ENCODE measurements at regions of chr10 and their contacts with region 1.

Region 1: GRCh38 chr10:101012525-101013364 is 13.1 kb downstream of the LZTS2 start:
- DNase-seq: peak; percentile 91
- H3K4me3 ChIP-seq: no peak overlapping the region
- H3K27ac ChIP-seq: peak overlapping the region; percentile 18 to 76; a peak in 3 of 4 replicates
- H3K4me1 ChIP-seq: peaks cover 8 to 26% of the 10 kb centered on the region in 2 experiments; a peak in 3 of 4 replicates
- H3K27me3 ChIP-seq: no peaks in the 10 kb centered on the region
- CTCF ChIP-seq: peak; percentile 97
- EP300 ChIP-seq: no peak
- RAD21 ChIP-seq: peak; percentile 77

Region 2: GRCh38 chr10:100962351-100963080 is 50.2 kb before region 1 on chr10:
- CTCF ChIA-PET with region 1: interaction called, 18 read pairs
- POLR2A ChIA-PET with region 1: no interaction called
- DNase-seq: no peak
- H3K4me3 ChIP-seq: no peak overlapping the region
- H3K27ac ChIP-seq: no peak overlapping the region
- H3K4me1 ChIP-seq: no peaks in the 10 kb centered on the region
- H3K27me3 ChIP-seq: no peaks in the 10 kb centered on the region
- CTCF ChIP-seq: no peak
- EP300 ChIP-seq: no peak
- RAD21 ChIP-seq: no peak

Region 3: DNA sequence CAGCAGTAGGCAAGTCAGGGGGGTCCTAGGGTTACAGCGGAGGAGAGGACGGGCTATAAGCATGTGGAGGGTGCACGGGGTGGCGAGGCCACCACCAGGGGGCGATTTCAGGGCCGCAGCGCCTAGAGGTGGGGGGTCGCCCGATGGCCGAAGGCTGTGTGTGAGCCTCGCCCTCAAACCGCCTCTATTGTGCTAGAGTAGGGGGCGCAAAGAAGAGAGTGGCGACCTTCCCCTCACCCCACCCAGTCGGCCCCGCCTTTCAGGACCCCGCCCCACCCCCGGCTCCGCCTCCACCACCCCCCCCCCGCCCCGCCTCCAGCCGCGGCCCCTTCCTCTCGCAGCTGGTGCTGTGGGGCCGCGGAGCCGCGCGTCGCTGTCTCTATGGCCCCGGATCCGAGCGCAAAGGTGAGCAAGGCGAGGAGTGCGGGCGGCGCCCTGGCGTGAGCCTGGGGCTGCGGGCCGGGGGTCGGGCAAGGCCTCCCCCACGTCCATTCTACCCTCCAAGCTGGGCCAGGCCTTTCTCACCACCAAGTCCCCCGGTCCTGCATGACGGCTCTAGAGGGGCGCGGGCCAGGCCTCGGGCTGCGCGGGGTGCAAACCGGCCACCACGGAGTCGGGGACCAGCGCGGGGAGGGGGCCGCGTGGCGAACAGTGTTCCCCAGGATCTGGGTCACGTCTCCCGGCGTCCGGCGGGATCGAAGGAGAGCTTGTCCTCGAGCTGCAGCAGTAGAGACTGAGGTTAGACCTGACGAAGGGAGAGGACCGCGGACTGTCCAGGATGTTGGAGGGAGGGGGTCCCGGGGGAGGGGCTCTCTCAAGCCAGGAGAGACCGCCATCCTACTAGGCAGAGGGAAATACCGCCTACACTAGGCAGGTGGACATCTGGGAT is 43.3 kb before region 1 on chr10 and contains the start of gene SEMA4G:
- CTCF ChIA-PET with region 1: interaction called, 18 read pairs
- POLR2A ChIA-PET with region 1: no interaction called
- DNase-seq: peak; percentile 97
- H3K4me3 ChIP-seq: peak within 1 kb of the TSS; percentile 79 to 82
- H3K27ac ChIP-seq: peak within 1 kb of the TSS in 1 of 2 experiments; percentile 53; a peak in 1 of 4 replicates
- H3K4me1 ChIP-seq: peaks cover 4 to 19% of the 10 kb centered on the region in 2 experiments; a peak in 2 of 4 replicates
- H3K27me3 ChIP-seq: no peaks in the 10 kb centered on the region
- CTCF ChIP-seq: peak; percentile 79
- EP300 ChIP-seq: no peak
- RAD21 ChIP-seq: peak; percentile 24
- polyA plus RNA-seq, gene SEMA4G: 15.0 and 16.2 TPM in 2 replicates

Region 4: GRCh38 chr10:100986952-100987750 is 25.6 kb before region 1 on chr10 and contains the starts of genes MRPL43 and TWNK:
- CTCF ChIA-PET with region 1: interaction called, 443 read pairs
- POLR2A ChIA-PET with region 1: no interaction called
- DNase-seq: peak; percentile 93
- H3K4me3 ChIP-seq: peak within 1 kb of the TSS; percentile 85 to 98
- H3K27ac ChIP-seq: peak within 1 kb of the TSS; percentile 56 to 95; a peak in 3 of 4 replicates
- H3K4me1 ChIP-seq: peaks cover 21 to 45% of the 10 kb centered on the region in 2 experiments
- H3K27me3 ChIP-seq: no peaks in the 10 kb centered on the region
- CTCF ChIP-seq: no peak
- EP300 ChIP-seq: no peak; a peak in 1 of 4 replicates
- RAD21 ChIP-seq: no peak
- polyA plus RNA-seq, gene MRPL43: 173 and 208 TPM in 2 replicates
- polyA plus RNA-seq, gene TWNK: 16.4 and 20.0 TPM in 2 replicates

Region 5: DNA sequence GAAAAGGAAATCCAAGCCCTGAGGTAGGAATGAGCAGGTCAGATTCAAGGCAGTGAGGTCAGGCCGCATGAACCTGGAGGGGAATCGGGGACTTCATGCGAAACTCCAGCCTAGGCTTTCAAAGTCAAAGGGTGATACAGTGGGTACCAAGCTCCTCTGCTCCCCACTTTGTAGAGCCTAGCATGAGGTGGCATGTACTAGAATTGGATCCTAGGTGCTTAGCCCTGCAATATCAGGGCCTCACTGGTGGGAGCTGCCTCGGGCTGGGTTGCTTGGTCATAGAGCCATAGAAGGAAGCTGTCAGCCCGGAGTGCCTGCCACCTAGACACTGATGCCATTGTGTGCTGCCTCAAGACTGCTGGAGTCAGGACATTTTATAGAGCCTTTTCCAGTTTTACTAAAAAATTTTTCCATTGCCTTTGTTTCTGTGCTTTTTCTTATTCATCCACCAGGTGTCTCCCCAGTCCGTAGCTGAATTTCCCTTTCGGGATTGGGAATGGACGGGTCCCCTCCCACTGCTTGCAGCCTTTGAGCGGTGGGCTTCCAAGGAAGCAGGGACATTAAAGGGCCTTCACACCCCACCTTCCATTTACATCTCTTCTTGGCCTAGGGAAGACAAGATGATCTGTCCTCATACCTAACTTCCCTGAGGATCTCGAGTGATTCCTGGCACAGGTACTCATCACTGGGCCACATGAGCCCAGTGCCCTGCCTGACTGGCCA is 18.6 kb before region 1 on chr10:
- CTCF ChIA-PET with region 1: interaction called, 443 read pairs
- POLR2A ChIA-PET with region 1: interaction called, 8 read pairs
- DNase-seq: peak; percentile 70
- H3K4me3 ChIP-seq: no peak overlapping the region
- H3K27ac ChIP-seq: peak overlapping the region in 1 of 2 experiments; percentile 28; a peak in 1 of 4 replicates
- H3K4me1 ChIP-seq: peaks cover 10 to 31% of the 10 kb centered on the region in 2 experiments
- H3K27me3 ChIP-seq: no peaks in the 10 kb centered on the region
- CTCF ChIP-seq: peak; percentile 77
- EP300 ChIP-seq: no peak
- RAD21 ChIP-seq: peak; percentile 77

Region 6: DNA sequence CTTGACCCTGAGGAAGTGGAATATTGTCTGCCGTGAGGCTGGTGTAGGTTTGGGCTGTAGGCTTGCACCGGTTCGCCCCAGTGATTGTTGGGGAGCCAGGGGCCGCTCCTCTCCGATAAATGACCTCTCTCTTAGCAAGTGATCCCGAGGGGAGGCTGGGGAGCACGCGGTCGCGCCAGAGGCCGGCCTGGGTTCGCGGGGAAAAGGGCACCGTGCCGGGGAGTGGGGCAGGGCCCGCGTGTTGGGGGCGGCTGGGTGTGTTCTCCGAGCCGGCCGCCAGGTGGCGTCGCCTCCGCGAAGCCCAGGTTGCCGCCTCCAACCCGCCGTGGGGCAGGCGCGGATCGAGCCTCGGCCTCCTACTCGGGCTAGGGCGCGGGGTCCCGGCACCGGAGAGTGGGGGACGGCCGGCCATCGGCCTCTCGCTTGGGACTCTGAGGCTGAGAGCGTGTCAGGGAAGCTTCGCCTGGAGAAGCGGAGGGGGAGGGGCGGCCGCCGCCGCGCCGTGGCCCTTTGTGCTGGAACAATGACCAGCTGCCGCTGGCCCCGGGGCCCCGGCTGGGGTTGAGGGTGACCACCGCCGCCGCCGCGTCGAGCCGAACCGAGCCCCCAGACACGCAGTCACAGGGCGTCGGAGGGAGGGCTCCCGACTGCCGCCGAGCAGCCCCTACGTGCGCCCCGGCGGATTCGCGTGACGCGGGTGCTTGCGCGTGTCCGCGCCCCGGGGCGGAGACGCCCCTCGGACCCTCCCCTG is 13.6 kb before region 1 on chr10:
- CTCF ChIA-PET with region 1: interaction called, 443 read pairs
- POLR2A ChIA-PET with region 1: interaction called, 8 read pairs
- DNase-seq: peak; percentile 93
- H3K4me3 ChIP-seq: peak overlapping the region; percentile 66 to 90
- H3K27ac ChIP-seq: peak overlapping the region; percentile 98 to 99
- H3K4me1 ChIP-seq: peaks cover 20 to 37% of the 10 kb centered on the region in 2 experiments; a peak in 3 of 4 replicates
- H3K27me3 ChIP-seq: no peaks in the 10 kb centered on the region
- CTCF ChIP-seq: peak; percentile 77
- EP300 ChIP-seq: no peak; a peak in 1 of 4 replicates
- RAD21 ChIP-seq: peak; percentile 52

Region 7: DNA sequence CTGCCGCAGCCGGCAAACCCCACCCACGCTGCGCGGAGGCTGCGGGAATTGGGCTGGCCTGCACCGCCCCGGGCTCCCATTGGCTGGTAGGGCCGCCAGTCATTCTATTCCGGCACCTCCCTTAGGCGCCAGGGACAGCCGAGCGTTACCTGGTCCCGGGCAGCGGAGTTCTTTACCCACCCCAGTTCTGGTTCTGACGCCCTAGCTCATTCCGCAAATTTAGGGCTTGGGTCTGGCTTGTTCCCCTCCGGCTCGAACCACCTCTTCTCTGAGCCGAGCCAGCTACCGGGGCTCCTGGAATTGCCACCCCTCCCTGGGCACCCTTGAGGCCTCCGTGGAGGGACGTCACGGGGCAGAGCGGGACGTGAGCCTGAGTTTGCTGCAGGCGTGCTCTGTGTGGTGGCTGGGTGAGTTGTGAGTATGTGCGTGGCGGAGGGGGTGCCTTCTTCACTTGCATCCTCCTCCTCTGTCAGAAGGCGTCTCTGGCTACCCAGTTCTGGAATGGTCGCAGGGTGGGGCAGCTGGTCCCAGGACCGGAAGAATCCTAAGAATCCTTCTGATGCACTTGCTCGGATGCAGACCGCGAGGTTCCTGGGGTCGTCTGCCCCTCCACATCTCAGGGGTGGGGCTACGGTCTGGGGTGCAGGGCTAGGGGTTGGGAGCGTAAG is 18.5 kb after region 1 on chr10 and contains the starts of genes PDZD7 and SFXN3:
- CTCF ChIA-PET with region 1: interaction called, 198 read pairs
- POLR2A ChIA-PET with region 1: no interaction called
- DNase-seq: peak; percentile 97
- H3K4me3 ChIP-seq: peak within 1 kb of the TSS; percentile 84 to 98
- H3K27ac ChIP-seq: peak within 1 kb of the TSS; percentile 98 to 99
- H3K4me1 ChIP-seq: peaks cover 7 to 43% of the 10 kb centered on the region in 2 experiments; a peak in 2 of 4 replicates
- H3K27me3 ChIP-seq: no peaks in the 10 kb centered on the region
- CTCF ChIP-seq: no peak
- EP300 ChIP-seq: no peak
- RAD21 ChIP-seq: no peak
- polyA plus RNA-seq, gene PDZD7: 1.9 and 2.3 TPM in 2 replicates
- polyA plus RNA-seq, gene SFXN3: 142 and 229 TPM in 2 replicates

Measured in SK-N-SH (cell line).